ENCODE measurements at regions of chr17 and their contacts with region 1.

Region 1: DNA sequence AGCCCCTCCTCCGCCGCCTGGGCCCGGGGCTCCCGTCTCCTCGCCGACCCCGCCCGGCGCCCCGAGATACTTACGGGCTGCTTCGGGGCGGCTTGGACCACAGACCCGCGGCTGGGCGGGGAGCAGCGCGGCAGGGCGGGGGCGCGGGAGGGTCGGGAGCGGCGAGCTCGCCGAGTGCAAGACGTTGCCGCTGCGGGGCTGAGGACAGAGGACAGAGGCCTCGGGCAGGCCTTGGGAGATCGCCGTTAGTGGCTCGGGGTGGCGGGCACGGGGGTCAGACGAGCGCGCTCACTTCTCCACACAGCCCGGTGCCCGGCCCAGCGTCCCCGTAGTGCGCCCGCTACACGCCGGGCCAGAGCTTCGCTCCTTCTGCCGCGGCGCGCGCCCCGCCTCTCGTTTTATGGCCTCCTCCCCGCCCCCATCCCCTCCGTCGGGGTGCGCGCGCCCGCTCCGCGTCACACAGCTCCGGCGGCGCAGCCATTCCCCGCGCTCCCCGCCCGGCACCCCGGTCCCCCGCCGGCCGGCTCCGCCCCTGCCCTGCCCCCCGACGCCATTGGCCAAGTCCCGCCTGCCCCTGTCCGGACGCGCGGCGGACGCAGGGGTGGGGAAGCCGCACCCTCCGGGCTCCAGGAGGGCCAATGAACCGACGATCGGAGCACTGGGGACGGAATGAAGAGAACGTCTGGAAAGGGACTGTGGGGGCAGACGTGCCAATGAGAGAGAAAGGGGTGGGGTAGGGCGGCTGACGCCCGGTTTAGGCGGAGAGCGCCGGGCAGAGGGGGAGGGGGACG is at the start of gene TOB1:
- DNase-seq: peak; percentile 96 to 98
- H3K4me3 ChIP-seq: peak within 1 kb of the TSS; percentile 83
- H3K27ac ChIP-seq: peak within 1 kb of the TSS; percentile 95
- H3K4me1 ChIP-seq: peaks cover 52% of the 10 kb centered on the region
- H3K27me3 ChIP-seq: no peaks in the 10 kb centered on the region
- CTCF ChIP-seq: no peak
- total RNA-seq, gene TOB1: 54.2 and 67.9 TPM in 2 replicates

Region 2: DNA sequence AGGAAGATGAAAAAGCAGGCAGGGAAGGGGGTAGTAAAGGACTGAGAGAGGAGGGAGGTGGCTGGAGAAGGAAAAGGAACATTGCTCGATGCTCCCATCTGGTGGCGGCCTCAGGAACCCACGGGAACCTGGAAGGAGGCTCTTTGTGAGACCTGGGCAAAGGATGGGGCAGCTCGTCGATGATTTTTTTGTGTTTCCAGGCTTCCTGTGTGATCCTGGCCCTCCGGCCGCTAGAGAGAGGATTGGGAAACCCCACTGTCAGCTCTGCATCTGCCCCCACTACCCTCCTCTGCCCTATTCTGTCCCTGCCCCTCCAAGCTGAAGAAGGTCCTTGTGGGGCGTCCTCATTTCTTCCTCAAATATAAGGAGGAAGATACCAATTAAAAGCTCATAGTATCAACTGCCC is 24.2 kb before region 1 on chr17:
- CTCF ChIA-PET with region 1: no interaction called
- POLR2A ChIA-PET with region 1: interaction called, 16 read pairs
- intact Hi-C with region 1: no loop called
- DNase-seq: peak; percentile 43 to 76
- H3K4me3 ChIP-seq: no peak overlapping the region
- H3K27ac ChIP-seq: no peak overlapping the region
- H3K4me1 ChIP-seq: peaks cover 18% of the 10 kb centered on the region
- H3K27me3 ChIP-seq: no peaks in the 10 kb centered on the region
- CTCF ChIP-seq: peak; percentile 83

Region 3: DNA sequence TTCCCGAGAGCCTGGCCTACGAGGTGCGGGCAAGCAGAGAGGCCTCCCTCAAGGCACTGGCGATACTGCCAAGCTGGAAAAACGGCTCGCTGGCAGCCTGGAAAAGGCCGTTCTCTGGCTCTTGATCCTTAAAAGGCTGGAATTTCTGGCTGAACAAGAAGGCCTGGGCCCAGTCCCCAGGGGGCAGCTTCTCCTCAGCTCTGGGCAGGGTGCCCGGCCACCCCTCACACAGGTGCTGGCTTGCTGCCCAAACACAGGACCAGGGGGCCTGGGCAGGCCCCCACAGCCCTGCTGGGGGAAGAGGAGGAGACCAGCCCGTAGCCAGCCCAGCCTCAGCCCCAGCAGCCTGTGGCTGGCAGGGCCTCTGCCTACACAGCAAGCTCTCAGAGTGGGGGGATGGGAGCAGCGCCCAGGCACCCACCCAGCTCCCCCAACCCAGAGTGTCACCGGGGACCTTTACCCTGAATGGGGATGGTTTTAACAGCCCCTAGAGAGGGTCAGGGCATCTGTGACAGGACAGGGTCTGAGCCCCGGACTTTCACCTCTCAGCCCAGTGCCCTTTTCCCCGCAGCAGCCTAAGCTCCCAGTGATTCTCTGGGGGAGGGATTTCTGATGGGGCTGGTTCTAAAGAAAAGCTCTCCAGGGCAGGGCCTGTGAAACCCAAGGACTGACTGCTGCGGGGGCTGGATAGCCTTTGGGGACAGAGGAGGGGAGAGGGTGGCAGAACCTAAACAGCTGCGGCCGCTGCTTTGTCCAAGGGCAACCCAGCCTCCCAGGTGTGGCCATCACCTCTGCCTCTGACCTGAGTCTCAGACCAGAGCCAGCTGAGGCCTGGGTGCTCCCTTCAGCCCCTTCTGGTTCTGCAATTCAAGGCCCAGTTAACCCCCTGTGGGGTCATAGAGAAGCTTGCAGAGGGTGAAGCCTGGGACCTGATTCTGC is 38.6 kb after region 1 on chr17:
- CTCF ChIA-PET with region 1: no interaction called
- POLR2A ChIA-PET with region 1: interaction called, 5 read pairs
- intact Hi-C with region 1: loop called (anchors 1 kb)
- DNase-seq: peak; percentile 83 to 95
- H3K4me3 ChIP-seq: peak overlapping the region; percentile 42; the same call in 1 of the 2 replicates
- H3K27ac ChIP-seq: peak overlapping the region; percentile 87
- H3K4me1 ChIP-seq: peaks cover 60% of the 10 kb centered on the region
- H3K27me3 ChIP-seq: no peaks in the 10 kb centered on the region
- CTCF ChIP-seq: peak; percentile 48

Region 4: DNA sequence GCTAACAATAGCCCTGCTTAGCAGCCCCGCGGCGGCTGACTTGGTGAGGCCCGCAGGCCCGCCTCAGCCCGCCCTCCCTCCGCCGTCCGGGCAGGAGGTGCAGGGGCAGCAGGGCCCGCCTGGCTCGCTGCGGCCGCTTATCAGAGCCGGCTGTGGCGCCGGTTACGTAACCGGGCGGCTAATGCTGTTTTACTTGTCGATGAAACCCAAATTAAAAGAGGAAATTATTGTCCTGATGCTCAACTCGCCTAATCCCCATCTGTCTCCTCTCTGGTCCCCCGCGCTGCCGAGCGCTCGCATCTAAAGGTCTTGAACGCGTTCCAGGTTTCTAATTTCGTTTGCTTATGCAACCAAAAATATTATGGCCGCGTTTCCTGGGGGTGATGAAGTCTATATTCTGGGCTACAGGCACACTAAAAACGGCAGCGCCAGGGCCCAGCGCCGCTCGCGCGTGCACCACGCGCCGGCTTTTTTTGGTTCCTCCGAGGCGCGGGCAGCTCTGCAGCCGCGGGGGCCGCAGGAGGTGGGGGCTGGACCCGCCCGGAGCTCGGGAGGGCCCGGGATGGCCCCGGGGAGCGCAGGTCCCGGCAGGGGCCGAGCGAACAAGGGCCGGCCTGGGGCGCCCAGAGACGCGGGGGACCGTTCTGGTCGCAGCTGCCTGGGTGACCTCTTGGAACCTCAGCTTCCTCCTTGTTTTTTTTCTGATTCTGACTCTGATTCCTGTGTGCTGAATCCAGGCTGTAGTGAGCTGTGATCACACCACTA is 65.1 kb after region 1 on chr17:
- CTCF ChIA-PET with region 1: no interaction called
- POLR2A ChIA-PET with region 1: interaction called, 19 read pairs
- intact Hi-C with region 1: no loop called
- DNase-seq: peak; percentile 71 to 72
- H3K4me3 ChIP-seq: peak overlapping the region; percentile 56
- H3K27ac ChIP-seq: peak overlapping the region; percentile 75
- H3K4me1 ChIP-seq: peaks cover 65% of the 10 kb centered on the region
- H3K27me3 ChIP-seq: no peaks in the 10 kb centered on the region
- CTCF ChIP-seq: no peak

Region 5: DNA sequence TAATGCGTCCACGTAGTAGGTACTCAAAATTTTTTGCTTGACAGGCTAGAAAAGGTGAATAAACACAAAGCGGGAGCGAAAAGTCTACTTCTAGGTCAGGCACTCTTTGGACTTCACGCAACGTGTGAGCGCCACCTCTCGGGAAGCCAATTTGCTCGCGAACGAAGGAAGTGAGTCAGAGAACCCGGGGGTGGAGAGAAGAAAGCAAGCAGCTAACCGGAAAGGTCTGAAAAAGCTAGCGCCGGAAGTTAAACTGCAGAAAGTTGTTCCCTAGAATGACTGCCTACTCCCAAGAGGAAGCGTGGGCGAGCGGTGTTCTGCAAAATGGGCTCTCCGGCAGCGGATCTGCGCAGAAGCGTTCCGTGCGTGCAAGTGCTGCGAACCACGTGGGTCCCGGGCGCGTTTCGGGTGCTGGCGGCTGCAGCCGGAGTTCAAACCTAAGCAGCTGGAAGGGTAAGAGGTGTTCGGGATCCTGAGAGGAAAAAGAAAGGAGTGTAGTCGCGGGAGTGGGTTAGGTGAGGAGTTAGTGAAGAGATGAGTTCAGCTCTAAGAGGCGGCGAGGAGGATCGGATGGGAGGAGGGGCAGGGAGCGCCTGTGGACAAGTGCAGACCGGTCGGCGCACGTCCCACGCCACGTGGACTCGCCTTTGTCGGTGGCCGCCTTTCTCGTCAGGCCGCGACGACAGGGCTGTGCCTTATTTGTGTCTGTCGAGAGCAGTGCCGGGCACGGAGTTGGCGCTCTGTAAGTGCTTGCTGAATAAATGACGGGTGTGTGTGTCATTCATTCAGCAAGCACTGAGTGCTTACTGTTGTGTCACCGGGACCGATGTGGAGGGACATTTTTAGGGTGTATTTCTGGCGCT is 287.3 kb after region 1 on chr17 and contains the start of gene NME1:
- CTCF ChIA-PET with region 1: no interaction called
- POLR2A ChIA-PET with region 1: interaction called, 14 read pairs
- intact Hi-C with region 1: no loop called
- DNase-seq: peak; percentile 96 to 99
- H3K4me3 ChIP-seq: peak within 1 kb of the TSS; percentile 72
- H3K27ac ChIP-seq: peak within 1 kb of the TSS; percentile 78
- H3K4me1 ChIP-seq: peaks cover 22% of the 10 kb centered on the region
- H3K27me3 ChIP-seq: no peaks in the 10 kb centered on the region
- CTCF ChIP-seq: peak; percentile 86
- total RNA-seq, gene NME1: 115 and 172 TPM in 2 replicates